ENCODE measurements at regions of chr1 and their contacts with region 1.

Region 1: DNA sequence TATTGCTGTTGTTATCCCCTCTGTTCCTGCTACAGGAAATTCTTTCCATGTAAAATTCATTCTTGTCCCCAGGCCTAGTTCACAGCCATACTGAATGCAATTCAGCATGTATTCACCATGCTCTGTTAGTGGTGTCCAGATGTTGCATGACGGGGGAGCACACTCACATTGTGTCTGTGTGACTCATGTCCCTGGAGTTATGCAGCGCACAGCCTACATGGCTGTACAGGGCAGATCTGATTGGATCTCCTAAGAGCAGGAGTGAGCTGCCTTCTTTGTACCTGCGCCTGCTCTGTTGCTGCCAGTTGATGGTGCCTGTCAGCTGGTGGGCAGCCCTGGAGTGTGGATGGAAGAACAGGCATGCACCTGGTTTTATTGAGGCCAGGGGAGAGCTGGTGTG is 17.6 kb downstream of the HTR6 start:
- DNase-seq: no peak
- ATAC-seq: no peak
- H3K4me3 Mint-ChIP-seq: no peak overlapping the region
- H3K27ac Mint-ChIP-seq: no peak overlapping the region
- H3K4me1 Mint-ChIP-seq: peaks cover 16% of the 10 kb centered on the region
- H3K27me3 Mint-ChIP-seq: no peaks in the 10 kb centered on the region; the same call in 1 of the 2 replicates
- CTCF ChIP-seq: no peak

Region 2: GRCh38 chr1:19772053-19772452 is 89.8 kb after region 1 on chr1:
- CTCF ChIA-PET with region 1: no interaction called
- POLR2A ChIA-PET with region 1: interaction called, 15 read pairs
- DNase-seq: peak; percentile 40
- ATAC-seq: peak; percentile 58
- H3K4me3 Mint-ChIP-seq: no peak overlapping the region
- H3K27ac Mint-ChIP-seq: no peak overlapping the region
- H3K4me1 Mint-ChIP-seq: peaks cover 19% of the 10 kb centered on the region
- H3K27me3 Mint-ChIP-seq: peaks cover 7% of the 10 kb centered on the region
- CTCF ChIP-seq: no peak

Measured in WTC11 (cell line).